Activated CD8-positive, alpha-beta T cell treated with anti-CD3 and anti-CD28 coated beads, Interleukin-2, amount 10 ng/mL, durations not matched to agents 7 days and 5 days (primary cell): ENCODE measurements at regions of chr12 and their contacts with region 1.

Region 1: GRCh38 chr12:121773011-121773777 is 20.3 kb downstream of the RHOF start:
- DNase-seq: peak; percentile 90
- ATAC-seq: peak; percentile 87
- H3K4me3 Mint-ChIP-seq: no peak overlapping the region
- H3K27ac Mint-ChIP-seq: peak overlapping the region; percentile 69
- H3K4me1 Mint-ChIP-seq: peaks cover 23% of the 10 kb centered on the region
- H3K27me3 Mint-ChIP-seq: no peaks in the 10 kb centered on the region

Region 2: GRCh38 chr12:121697098-121697698 is 76.0 kb before region 1 on chr12:
- CTCF ChIA-PET with region 1: interaction called, 28 read pairs
- POLR2A ChIA-PET with region 1: no interaction called
- DNase-seq: peak; percentile 62
- ATAC-seq: no peak
- H3K4me3 Mint-ChIP-seq: no peak overlapping the region
- H3K27ac Mint-ChIP-seq: no peak overlapping the region
- H3K4me1 Mint-ChIP-seq: peaks cover 4% of the 10 kb centered on the region
- H3K27me3 Mint-ChIP-seq: peaks cover 9% of the 10 kb centered on the region

Region 3: DNA sequence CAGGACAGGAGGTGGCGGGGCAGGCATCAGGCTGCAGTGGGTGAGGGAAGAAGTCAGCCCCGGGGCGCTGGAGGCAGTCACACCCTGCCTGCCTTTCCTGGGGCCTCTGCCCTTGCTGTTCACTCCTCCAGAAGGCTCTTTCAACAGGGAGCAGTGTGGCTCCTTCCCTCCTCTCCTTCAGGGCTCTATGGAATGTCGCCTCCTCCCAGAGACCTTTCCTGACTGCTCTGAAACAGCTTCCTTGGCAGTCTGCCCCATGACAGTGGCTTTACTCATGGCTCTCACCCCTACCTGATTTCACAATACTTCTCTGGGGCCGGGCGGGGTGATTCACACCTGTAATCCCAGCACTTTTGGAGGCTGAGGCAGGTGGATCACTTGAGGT is 13.2 kb after region 1 on chr12:
- CTCF ChIA-PET with region 1: interaction called, 581 read pairs
- POLR2A ChIA-PET with region 1: interaction called, 46 read pairs
- DNase-seq: peak; percentile 38
- ATAC-seq: no peak
- H3K4me3 Mint-ChIP-seq: peak overlapping the region; percentile 94
- H3K27ac Mint-ChIP-seq: peak overlapping the region; percentile 99
- H3K4me1 Mint-ChIP-seq: peaks cover 90% of the 10 kb centered on the region
- H3K27me3 Mint-ChIP-seq: no peaks in the 10 kb centered on the region